ENCODE measurements at regions of chr14 and their contacts with region 1.

Region 1: DNA sequence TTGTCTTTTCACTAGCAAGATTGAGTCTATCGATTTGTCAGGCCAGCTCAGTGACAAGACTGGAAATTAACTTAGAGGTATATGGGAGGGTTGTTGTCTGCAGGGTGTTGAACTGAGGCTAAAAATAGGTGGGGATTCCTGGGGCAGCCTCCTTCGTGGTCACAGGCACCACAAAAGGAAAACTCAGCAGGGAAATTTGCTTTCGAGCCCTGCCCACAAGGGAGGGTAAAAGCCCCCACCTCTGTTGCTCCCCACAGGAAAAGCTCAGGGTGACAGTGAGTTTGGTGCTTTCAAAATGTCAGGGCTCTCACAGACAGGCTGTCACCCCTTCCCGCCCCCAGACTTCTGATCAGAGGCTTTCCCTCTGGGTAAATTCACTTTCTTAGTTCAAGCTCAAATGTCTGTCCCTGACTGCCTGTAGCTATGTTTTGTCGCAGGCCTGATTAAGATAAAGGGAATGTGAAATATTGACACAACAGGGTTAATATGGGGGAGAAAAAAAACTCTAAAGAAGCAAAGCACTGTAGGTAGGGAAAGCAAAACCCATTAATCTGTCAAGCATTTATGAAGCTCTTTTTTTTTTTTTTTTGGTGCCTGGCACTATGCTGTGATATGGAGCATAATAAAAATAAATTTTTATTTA is 11.7 kb upstream of the NFKBIA start:
- DNase-seq: no peak
- H3K4me3 ChIP-seq: no peak overlapping the region
- H3K27ac ChIP-seq: no peak overlapping the region
- H3K4me1 ChIP-seq: peaks cover 39% of the 10 kb centered on the region
- H3K27me3 ChIP-seq: no peaks in the 10 kb centered on the region
- CTCF ChIP-seq: no peak
- POLR2A ChIP-seq: no peak

Region 2: GRCh38 chr14:34982417-34983147 is 433.6 kb before region 1 on chr14 and contains the start of gene SRP54:
- CTCF ChIA-PET with region 1: interaction called, 3 read pairs
- POLR2A ChIA-PET with region 1: no interaction called
- dilution Hi-C with region 1: no loop called
- intact Hi-C with region 1: loop called (anchors 2 kb)
- DNase-seq: peak; percentile 98
- H3K4me3 ChIP-seq: peak within 1 kb of the TSS; percentile 71 to 91 (median 85)
- H3K27ac ChIP-seq: peak within 1 kb of the TSS; percentile 94
- H3K4me1 ChIP-seq: peaks cover 15% of the 10 kb centered on the region
- H3K27me3 ChIP-seq: no peaks in the 10 kb centered on the region
- CTCF ChIP-seq: peak in 1 of 2 donors; percentile 50
- POLR2A ChIP-seq: peak; percentile 91
- total RNA-seq, gene SRP54: 60.7 and 63.7 TPM in 2 replicates

Region 3: DNA sequence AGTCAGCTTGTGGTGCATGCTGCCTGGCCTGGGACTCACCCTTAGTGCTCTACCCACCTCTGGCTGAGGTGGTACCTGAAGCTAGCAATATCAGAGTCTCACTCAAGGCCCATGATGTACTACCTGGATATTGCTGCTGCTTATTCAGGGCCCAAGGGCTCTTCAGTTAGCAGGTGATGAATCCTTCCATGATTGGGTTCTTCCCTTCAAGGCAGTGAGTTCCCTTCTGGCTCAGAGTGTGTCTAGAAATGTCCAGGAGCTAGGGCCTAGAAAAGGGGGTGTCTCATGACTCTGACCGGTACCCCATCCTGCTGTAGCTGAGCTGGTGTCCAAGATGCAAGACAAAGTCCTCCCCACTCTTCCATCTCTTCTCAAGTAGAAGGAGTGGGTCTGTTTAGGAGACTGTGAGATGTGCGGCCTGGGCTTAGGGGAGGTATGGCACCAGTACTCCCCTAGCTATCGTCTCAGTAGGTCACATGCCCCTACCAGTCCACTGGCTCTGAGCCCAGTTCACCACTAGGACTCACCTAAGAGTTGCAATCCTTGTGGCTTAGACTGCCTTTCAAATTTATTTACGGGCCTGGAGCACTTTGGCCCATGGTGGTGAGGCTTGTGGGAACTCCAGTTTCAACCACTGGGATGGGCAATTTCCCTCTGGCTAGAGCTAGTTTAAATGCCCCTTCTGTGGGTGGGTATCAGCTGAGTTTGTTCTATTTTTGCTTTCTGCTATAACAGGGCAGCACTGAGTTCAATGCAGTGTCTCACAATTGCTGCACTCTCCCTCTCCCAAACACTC is 281.7 kb before region 1 on chr14:
- CTCF ChIA-PET with region 1: interaction called, 66 read pairs
- POLR2A ChIA-PET with region 1: interaction called, 3 read pairs
- dilution Hi-C with region 1: no loop called
- intact Hi-C with region 1: no loop called
- DNase-seq: no peak
- H3K4me3 ChIP-seq: no peak overlapping the region
- H3K27ac ChIP-seq: no peak overlapping the region
- H3K4me1 ChIP-seq: no peaks in the 10 kb centered on the region
- H3K27me3 ChIP-seq: no peaks in the 10 kb centered on the region
- CTCF ChIP-seq: no peak
- POLR2A ChIP-seq: no peak

Region 4: GRCh38 chr14:35229495-35230089 is 186.6 kb before region 1 on chr14:
- CTCF ChIA-PET with region 1: interaction called, 25 read pairs
- POLR2A ChIA-PET with region 1: no interaction called
- dilution Hi-C with region 1: no loop called
- intact Hi-C with region 1: no loop called
- DNase-seq: peak; percentile 41
- H3K4me3 ChIP-seq: no peak overlapping the region
- H3K27ac ChIP-seq: no peak overlapping the region
- H3K4me1 ChIP-seq: no peaks in the 10 kb centered on the region
- H3K27me3 ChIP-seq: no peaks in the 10 kb centered on the region
- CTCF ChIP-seq: peak; percentile 9 to 10
- POLR2A ChIP-seq: no peak

Region 5: DNA sequence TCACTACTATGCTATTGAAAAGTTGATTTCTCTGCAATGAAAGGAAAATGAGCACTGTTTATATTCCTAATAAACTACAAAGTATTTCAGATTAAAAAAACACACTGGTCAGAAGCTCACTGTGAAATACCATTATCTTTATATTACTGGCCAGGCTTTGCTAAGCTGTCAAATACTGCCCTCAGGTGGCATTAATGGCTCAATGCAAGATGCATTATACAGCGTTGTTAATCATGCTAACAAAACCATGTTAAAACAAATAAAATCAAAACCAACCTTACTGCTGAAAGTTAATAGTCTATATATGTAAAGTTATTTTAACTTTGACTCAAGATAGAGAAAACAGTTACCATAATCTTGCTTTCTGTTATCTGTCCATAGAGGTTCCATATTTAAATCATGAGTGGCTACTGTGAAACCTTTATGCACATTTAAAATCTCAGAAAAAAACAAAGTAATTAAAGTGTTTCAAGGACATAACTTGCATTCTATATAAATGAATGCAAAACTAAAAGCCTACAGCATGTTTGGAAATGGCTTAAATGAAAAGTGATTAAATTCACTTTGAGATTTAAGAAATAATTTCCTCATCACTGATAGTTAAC is 271.2 kb after region 1 on chr14:
- CTCF ChIA-PET with region 1: interaction called, 30 read pairs
- POLR2A ChIA-PET with region 1: no interaction called
- dilution Hi-C with region 1: no loop called
- intact Hi-C with region 1: loop called (anchors 2 kb)
- DNase-seq: peak; percentile 62
- H3K4me3 ChIP-seq: no peak overlapping the region
- H3K27ac ChIP-seq: no peak overlapping the region
- H3K4me1 ChIP-seq: peaks cover 16% of the 10 kb centered on the region
- H3K27me3 ChIP-seq: no peaks in the 10 kb centered on the region
- CTCF ChIP-seq: peak; percentile 60 to 67
- POLR2A ChIP-seq: no peak